Activated CD8-positive, alpha-beta memory T cell treated with anti-CD3 and anti-CD28 coated beads, Interleukin-2, amount 10 ng/mL, durations not matched to agents 7 days and 5 days (primary cell): ENCODE measurements at regions of chr2 and their contacts with region 1.

Region 1: GRCh38 chr2:197804049-197804757 is at the start of gene PLCL1:
- DNase-seq: peak; percentile 92
- ATAC-seq: peak; percentile 100
- H3K4me3 Mint-ChIP-seq: peak within 1 kb of the TSS; percentile 83
- H3K27ac Mint-ChIP-seq: peak within 1 kb of the TSS; percentile 9
- H3K4me1 Mint-ChIP-seq: peaks cover 20% of the 10 kb centered on the region
- H3K27me3 Mint-ChIP-seq: peaks cover 54% of the 10 kb centered on the region
- total RNA-seq, gene PLCL1: 0.20 to 0.26 TPM

Region 2: DNA sequence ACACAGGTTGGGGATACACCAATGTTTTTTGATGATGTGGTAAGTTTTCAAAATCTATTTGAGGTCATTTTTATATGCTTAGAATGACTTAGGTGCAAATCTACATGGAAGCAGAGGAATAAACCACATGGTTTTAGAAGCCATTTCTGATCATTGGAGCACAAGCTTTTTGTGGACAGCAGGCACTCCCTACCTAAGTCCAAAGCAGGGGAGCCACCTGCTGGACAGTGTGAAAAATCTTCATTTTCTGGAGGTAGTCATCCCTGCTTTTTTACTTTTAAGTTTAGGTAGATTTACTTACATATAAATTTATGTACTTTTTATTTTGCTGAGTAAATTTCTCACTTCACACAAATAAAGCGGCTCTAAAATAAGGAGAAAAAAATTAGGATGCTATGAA is 323.4 kb after region 1 on chr2:
- CTCF ChIA-PET with region 1: interaction called, 10 read pairs
- DNase-seq: no peak
- ATAC-seq: no peak
- H3K4me3 Mint-ChIP-seq: no peak overlapping the region
- H3K27ac Mint-ChIP-seq: no peak overlapping the region
- H3K4me1 Mint-ChIP-seq: no peaks in the 10 kb centered on the region
- H3K27me3 Mint-ChIP-seq: no peaks in the 10 kb centered on the region

Region 3: GRCh38 chr2:198296665-198297308 is 492.6 kb after region 1 on chr2:
- CTCF ChIA-PET with region 1: interaction called, 13 read pairs
- DNase-seq: peak; percentile 63
- ATAC-seq: peak; percentile 80
- H3K4me3 Mint-ChIP-seq: no peak overlapping the region
- H3K27ac Mint-ChIP-seq: no peak overlapping the region
- H3K4me1 Mint-ChIP-seq: no peaks in the 10 kb centered on the region
- H3K27me3 Mint-ChIP-seq: peaks cover 6% of the 10 kb centered on the region